ENCODE measurements at regions of chr1 and their contacts with region 1.

Region 1: DNA sequence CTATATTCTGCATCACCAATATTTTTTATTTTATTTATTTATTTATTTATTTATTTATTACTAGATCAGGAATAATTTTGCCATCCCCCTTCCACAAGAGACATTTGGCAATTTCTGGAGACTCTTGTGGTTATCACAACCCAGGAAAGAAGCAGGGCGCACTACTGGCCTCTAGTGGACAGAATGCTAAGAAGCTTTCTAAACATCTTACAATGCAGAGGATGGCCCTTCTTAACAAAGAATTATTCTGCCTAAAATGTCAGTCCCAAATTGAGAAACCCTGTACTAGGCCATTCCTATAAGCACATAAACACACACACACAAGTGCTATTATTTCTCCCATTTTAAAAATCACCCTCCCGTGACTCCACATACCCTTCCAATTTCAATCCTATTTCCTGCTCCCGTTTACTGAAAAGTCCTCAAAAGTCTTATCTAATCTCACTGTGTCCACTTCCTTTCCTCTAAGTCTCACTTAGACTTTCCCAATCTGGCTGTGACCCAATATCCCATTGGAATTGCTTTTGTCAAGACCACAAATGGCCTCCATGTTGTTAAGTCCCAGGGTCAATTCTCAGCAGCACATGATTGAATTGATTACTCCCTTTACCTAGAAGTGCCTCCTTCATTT is 43.7 kb upstream of the RNF11 start:
- DNase-seq: peak; percentile 63
- ATAC-seq: peak; percentile 86
- H3K4me3 ChIP-seq: no peak overlapping the region
- H3K27ac ChIP-seq: no peak overlapping the region
- H3K4me1 ChIP-seq: no peaks in the 10 kb centered on the region
- H3K27me3 ChIP-seq: no peaks in the 10 kb centered on the region
- CTCF ChIP-seq: peak; percentile 70 to 87 (median 79)
- POLR2A ChIP-seq: no peak
- RAD21 ChIP-seq: peak; percentile 70

Region 2: DNA sequence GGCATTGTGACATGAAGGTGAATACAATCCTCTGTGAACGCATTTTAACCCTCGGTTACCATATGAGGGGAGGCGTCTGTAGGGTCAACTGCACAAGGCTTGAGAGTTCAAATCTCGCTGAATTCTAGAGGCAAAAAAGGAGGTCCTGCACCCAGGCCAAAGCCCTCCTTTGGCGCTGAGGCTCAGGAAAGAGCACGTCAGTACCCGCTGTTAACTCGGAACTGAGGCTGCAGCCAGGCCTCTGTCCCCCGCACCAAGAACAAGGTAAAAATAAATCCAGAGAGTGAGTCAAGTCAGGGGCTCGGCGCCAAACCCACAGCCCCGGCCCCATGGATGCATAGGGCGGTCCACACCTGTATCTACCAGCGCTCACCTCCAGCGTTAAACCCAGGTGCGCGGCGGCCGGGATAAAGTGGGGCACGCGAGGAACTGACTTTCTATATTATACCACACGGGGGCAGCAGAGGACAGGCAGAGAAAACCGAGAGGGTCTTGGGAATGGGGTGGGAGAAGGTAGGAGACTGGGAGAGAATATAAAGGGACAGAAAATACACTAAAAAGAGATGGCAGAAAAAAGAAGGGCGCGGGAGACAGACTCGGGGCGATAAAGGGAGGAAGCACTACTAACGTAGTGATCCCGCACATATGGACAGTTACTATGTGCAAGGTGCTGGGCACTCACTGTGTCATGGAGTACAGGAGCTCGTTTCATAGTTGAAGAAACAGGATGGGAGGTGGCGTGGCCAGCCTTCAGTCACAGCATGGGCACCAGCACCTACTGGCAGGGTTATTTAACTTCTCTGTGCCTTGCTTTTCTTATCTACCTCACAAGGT is 823.9 kb before region 1 on chr1:
- CTCF ChIA-PET with region 1: interaction called, 3 read pairs
- POLR2A ChIA-PET with region 1: no interaction called
- RAD21 ChIA-PET with region 1: no interaction called
- intact Hi-C with region 1: loop called (anchors 1 kb)
- DNase-seq: peak; percentile 21
- ATAC-seq: peak; percentile 92
- H3K4me3 ChIP-seq: no peak overlapping the region
- H3K27ac ChIP-seq: no peak overlapping the region
- H3K4me1 ChIP-seq: no peaks in the 10 kb centered on the region
- H3K27me3 ChIP-seq: peaks cover 34% of the 10 kb centered on the region
- CTCF ChIP-seq: peak; percentile 56 to 89 (median 83)
- POLR2A ChIP-seq: no peak
- RAD21 ChIP-seq: peak; percentile 93

Region 3: DNA sequence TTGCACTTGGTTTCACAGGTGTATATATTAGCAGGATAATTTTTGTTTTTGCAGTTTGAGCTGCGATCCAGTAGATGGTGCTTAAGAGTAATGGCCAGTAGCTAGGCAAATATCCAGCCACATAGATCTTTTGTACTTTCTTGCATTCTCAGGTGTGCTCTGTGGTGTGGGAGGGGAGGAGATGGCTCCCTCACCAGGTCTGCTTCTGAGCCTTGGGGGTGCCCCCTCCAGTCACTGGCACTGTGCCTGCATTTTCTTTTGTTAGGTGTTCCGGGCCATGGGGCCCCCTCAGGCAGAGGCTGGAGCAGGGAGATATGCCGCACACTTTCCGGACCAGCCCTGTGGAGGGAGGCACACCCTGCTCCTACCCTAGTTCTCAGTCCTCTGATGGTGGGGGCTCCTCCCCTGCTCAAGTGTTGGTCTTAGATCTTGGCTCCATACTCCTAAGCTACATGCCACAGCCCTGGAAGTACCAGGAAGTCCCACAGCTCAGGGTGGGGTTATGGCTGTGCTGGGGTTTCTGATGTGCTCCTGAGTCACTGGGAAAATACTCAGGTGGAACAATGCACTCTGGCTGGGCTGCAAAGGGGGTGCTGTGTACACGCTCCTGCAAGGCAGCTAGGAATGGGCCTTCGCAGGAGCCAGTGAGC is 571.5 kb before region 1 on chr1:
- CTCF ChIA-PET with region 1: no interaction called
- POLR2A ChIA-PET with region 1: no interaction called
- RAD21 ChIA-PET with region 1: no interaction called
- intact Hi-C with region 1: loop called (anchors 5 kb)
- DNase-seq: peak; percentile 61
- ATAC-seq: peak; percentile 87
- H3K4me3 ChIP-seq: peak overlapping the region in 1 of 2 experiments; percentile 35; a peak in 1 of 4 replicates
- H3K27ac ChIP-seq: peak overlapping the region; percentile 46
- H3K4me1 ChIP-seq: peaks cover 0 to 17% of the 10 kb centered on the region in 2 experiments; a peak in 2 of 4 replicates
- H3K27me3 ChIP-seq: no peaks in the 10 kb centered on the region
- CTCF ChIP-seq: peak; percentile 61 to 65 (median 62)
- POLR2A ChIP-seq: no peak
- RAD21 ChIP-seq: peak; percentile 57

Region 4: GRCh38 chr1:50774759-50775351 is 417.5 kb before region 1 on chr1:
- CTCF ChIA-PET with region 1: interaction called, 36 read pairs
- POLR2A ChIA-PET with region 1: no interaction called
- RAD21 ChIA-PET with region 1: interaction called in 1 of 2 experiments, 4 read pairs
- intact Hi-C with region 1: loop called (anchors 1 kb)
- DNase-seq: peak; percentile 48
- ATAC-seq: peak; percentile 59; the same call in 1 of the 2 replicates
- H3K4me3 ChIP-seq: no peak overlapping the region
- H3K27ac ChIP-seq: no peak overlapping the region
- H3K4me1 ChIP-seq: no peaks in the 10 kb centered on the region
- H3K27me3 ChIP-seq: no peaks in the 10 kb centered on the region
- CTCF ChIP-seq: peak; percentile 60 to 71 (median 68)
- POLR2A ChIP-seq: no peak
- RAD21 ChIP-seq: peak; percentile 77

Region 5: DNA sequence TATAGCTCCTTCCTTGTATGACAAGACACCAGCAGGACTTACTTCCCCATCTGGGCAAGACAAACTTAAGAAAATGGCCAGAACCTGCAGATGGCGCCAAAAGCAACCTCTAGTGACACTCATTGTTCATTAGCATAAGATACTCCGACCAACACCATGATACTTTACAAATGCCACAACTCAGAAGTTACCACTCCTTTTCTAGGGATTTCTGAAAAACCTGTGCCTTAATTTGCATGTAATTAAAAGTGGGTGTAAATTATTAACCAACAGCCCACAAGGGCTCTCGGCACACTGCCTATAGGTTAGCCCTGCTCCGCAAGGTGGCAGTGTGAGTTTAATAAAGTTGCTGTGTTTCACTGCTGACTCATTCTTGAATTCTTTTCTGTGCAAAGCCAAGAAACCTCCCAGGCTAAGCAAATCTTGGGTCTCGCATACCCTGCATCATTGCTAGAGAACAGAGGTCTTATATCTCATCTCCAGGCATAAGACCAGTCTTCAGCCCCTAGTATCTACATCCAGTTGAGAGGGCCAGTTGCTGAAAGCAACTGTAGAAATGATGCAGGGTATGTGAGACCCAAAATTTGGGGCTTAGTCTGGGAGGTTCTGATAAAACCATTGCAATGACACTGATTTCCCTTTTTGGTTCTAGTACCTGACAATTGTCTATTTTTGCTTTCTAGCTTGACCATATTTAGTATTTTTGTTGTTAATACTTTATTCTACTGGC is 318.7 kb before region 1 on chr1:
- CTCF ChIA-PET with region 1: interaction called, 12 read pairs
- POLR2A ChIA-PET with region 1: no interaction called
- RAD21 ChIA-PET with region 1: interaction called in 1 of 2 experiments, 3 read pairs
- intact Hi-C with region 1: loop called (anchors 1 kb)
- DNase-seq: peak; percentile 68
- ATAC-seq: peak; percentile 91
- H3K4me3 ChIP-seq: no peak overlapping the region; a peak in 1 of 4 replicates
- H3K27ac ChIP-seq: peak overlapping the region; percentile 5; the same call in 1 of the 2 replicates
- H3K4me1 ChIP-seq: peaks cover 3 to 13% of the 10 kb centered on the region in 2 experiments; a peak in 3 of 4 replicates
- H3K27me3 ChIP-seq: no peaks in the 10 kb centered on the region
- CTCF ChIP-seq: peak; percentile 80 to 99 (median 99)
- POLR2A ChIP-seq: no peak
- RAD21 ChIP-seq: peak; percentile 82

Region 6: GRCh38 chr1:50929376-50929958 is 262.9 kb before region 1 on chr1:
- CTCF ChIA-PET with region 1: interaction called, 16 read pairs
- POLR2A ChIA-PET with region 1: no interaction called
- RAD21 ChIA-PET with region 1: no interaction called
- intact Hi-C with region 1: loop called (anchors 2 kb)
- DNase-seq: peak; percentile 16
- ATAC-seq: no peak
- H3K4me3 ChIP-seq: no peak overlapping the region
- H3K27ac ChIP-seq: no peak overlapping the region
- H3K4me1 ChIP-seq: no peaks in the 10 kb centered on the region
- H3K27me3 ChIP-seq: no peaks in the 10 kb centered on the region
- CTCF ChIP-seq: peak; percentile 44 to 69 (median 53); a peak in 5 of 6 replicates
- POLR2A ChIP-seq: no peak
- RAD21 ChIP-seq: peak; percentile 67

Region 7: DNA sequence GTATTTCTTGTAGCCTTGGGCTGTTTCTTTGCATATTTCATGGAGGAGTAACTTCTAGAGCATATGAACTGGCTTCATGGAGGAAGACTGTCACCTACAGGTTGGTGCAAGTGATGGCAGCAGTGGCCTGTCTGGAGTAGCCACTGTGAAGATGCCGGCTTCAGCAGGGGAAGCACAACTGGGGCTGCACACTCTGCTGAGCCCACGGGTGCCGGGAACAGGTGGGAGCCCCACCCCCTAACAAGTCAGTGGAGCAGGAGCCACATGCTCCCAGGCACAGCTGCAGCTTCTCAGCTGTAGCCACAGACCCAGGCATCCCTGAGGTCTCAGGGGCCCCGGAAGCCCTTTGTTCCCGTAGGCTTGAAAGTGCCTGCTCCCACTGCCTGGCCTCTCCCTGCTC is 133.5 kb before region 1 on chr1:
- CTCF ChIA-PET with region 1: no interaction called
- POLR2A ChIA-PET with region 1: no interaction called
- RAD21 ChIA-PET with region 1: no interaction called
- intact Hi-C with region 1: no loop called
- DNase-seq: no peak
- ATAC-seq: peak; percentile 60
- H3K4me3 ChIP-seq: no peak overlapping the region
- H3K27ac ChIP-seq: no peak overlapping the region
- H3K4me1 ChIP-seq: peaks cover 9% of the 10 kb centered on the region in 2 experiments; a peak in 3 of 4 replicates
- H3K27me3 ChIP-seq: no peaks in the 10 kb centered on the region
- CTCF ChIP-seq: peak; percentile 23 to 36 (median 36); a peak in 2 of 6 replicates
- POLR2A ChIP-seq: no peak
- RAD21 ChIP-seq: peak; percentile 56; the same call in 1 of the 2 replicates

Region 8: DNA sequence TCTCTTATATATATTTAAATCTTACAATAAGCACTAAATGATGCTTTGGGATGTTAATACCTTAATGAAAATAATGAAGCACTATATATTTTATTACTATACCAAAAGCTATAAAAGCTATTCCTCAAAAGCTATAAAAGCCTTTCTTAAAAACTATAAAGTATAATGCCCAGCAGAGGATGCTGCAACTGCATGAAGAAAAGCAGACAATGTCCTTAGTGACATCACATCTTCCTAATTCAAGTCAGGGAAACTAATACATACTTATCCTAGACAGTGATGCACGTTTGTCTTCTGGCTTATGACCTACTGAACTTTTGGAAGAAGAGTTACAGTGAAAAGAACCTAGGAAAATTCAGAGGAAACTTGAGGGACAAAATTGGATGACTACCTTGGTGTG is 103.8 kb before region 1 on chr1:
- CTCF ChIA-PET with region 1: interaction called, 36 read pairs
- POLR2A ChIA-PET with region 1: no interaction called
- RAD21 ChIA-PET with region 1: interaction called in 1 of 2 experiments, 4 read pairs
- intact Hi-C with region 1: loop called (anchors 2 kb)
- DNase-seq: peak; percentile 7
- ATAC-seq: no peak
- H3K4me3 ChIP-seq: no peak overlapping the region
- H3K27ac ChIP-seq: no peak overlapping the region
- H3K4me1 ChIP-seq: no peaks in the 10 kb centered on the region
- H3K27me3 ChIP-seq: no peaks in the 10 kb centered on the region
- CTCF ChIP-seq: peak in 2 of 3 experiments; percentile 31 to 44; a peak in 2 of 6 replicates
- POLR2A ChIP-seq: no peak
- RAD21 ChIP-seq: peak; percentile 66